PC-9 (cell line): ENCODE measurements at regions of chr4 and their contacts with region 1.

Region 1: GRCh38 chr4:130563185-130563888 is 1467.4 kb downstream of the C4orf33 start:
- DNase-seq: peak in 1 of 2 experiments; percentile 45
- H3K4me3 ChIP-seq: peak overlapping the region; percentile 31; the same call in 1 of the 2 replicates
- H3K27ac ChIP-seq: no peak overlapping the region
- H3K4me1 ChIP-seq: no peaks in the 10 kb centered on the region
- H3K27me3 ChIP-seq: no peaks in the 10 kb centered on the region
- CTCF ChIP-seq: 0 out of 2 replicates have a peak, but pooled peaks have one; percentile 15

Region 2: GRCh38 chr4:130632731-130633604 is 69.6 kb after region 1 on chr4:
- CTCF ChIA-PET with region 1: no interaction called
- POLR2A ChIA-PET with region 1: no interaction called
- intact Hi-C with region 1: no loop called
- DNase-seq: no peak
- H3K4me3 ChIP-seq: no peak overlapping the region
- H3K27ac ChIP-seq: no peak overlapping the region
- H3K4me1 ChIP-seq: no peaks in the 10 kb centered on the region
- H3K27me3 ChIP-seq: no peaks in the 10 kb centered on the region
- CTCF ChIP-seq: no peak

Region 3: DNA sequence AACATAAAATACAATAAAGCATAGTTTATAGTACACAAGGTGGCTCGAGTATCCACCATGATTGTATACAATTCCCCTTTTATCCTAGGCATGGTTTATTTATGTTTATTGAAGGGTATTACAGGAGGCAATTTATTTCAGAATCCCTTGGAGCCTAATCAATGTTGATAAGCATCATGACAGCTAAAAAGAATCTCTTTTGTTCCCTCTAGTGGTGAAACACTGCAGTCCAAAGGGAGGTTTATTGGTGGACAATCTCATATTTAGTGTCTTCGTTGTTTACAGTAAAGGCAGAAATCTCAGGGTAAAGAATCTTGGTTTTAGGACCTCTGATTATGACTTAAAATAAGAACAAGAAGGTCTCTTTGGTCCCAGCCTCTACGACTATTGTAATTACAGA is 245.2 kb after region 1 on chr4:
- CTCF ChIA-PET with region 1: no interaction called
- POLR2A ChIA-PET with region 1: no interaction called
- intact Hi-C with region 1: loop called (anchors 10 kb)
- DNase-seq: no peak
- H3K4me3 ChIP-seq: no peak overlapping the region
- H3K27ac ChIP-seq: no peak overlapping the region
- H3K4me1 ChIP-seq: no peaks in the 10 kb centered on the region
- H3K27me3 ChIP-seq: no peaks in the 10 kb centered on the region
- CTCF ChIP-seq: peak; percentile 57